ENCODE measurements at regions of chr12 and their contacts with region 1.

Region 1: GRCh38 chr12:120904197-120904773 is at the start of gene SPPL3:
- DNase-seq: peak; percentile 82 to 97 (median 93)

Region 2: GRCh38 chr12:120725659-120726509 is 178.4 kb before region 1 on chr12 and contains the start of gene ACADS:
- intact Hi-C with region 1: loop called (anchors 10 kb)
- DNase-seq: peak; percentile 58 to 93 (median 86)

Region 3: GRCh38 chr12:120783197-120783596 is 121.1 kb before region 1 on chr12:
- intact Hi-C with region 1: no loop called
- DNase-seq: no peak

Region 4: DNA sequence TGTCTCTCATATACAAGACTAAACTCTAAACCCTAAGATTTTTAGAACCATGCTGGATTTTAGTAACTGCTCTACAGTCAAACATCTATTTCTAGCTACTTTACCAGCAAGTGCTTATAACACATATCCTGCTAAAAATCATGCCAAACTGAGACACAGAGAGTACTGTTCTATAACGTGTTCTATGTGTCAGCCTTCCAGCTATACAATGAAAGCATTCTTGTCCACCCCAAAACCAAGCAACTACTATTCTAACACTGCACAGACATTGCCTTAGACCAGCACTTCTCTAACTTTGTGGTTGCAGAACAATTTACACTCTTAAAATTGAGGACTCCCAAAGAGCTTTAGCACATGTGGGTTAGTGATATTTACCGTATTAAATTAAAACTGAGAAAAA is 85.9 kb before region 1 on chr12:
- intact Hi-C with region 1: no loop called
- DNase-seq: peak in 4 of 42 donors; percentile 26 to 72 (median 56)

Region 5: GRCh38 chr12:120856980-120857379 is 47.3 kb before region 1 on chr12:
- intact Hi-C with region 1: loop called (anchors 10 kb)
- DNase-seq: no peak

Measured in head of caudate nucleus (tissue), 42 donors.